BJ (cell line): ENCODE measurements at regions of chr1 and their contacts with region 1.

Region 1: DNA sequence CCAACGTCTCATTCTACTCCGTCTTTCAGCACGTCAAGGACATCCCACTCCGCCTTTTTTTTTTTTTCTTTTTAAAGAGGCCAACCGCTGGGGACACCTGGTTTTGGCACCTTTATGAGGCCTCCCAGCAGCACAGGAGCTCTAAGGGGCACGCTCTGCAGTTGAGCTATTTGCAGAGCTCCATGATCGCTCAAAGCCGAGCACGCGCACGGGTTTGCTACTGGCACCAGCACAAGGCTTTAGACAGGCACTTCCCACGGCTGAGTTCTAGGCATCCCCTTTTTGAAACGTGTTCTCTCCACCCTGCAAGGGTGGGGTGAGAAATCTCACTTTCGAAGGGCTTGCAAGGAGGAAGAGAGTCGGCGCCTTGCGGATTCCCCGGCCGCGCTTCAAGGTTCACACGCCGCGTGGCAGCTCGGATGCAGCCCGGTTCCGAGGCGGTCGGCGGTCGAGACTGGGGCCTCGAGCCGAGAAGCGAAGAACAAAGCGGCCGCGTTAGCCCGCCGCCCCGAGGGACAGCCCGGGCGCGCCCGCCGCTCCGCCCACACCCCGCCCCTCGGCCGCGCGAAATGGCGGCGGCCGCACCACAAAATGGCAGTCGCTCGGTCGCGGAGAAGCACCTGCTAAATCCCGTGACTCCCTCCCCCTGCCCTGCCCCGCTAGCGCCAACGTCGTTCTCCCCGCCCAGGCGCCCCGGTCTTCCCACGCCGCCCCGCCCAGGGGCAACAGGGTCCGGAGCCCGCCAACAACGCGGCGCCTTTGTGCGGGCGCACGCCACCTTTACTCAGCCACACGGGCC is 12.9 kb upstream of the SPEN start:
- DNase-seq: no peak
- H3K4me3 ChIP-seq: peak overlapping the region; percentile 88
- H3K27me3 ChIP-seq: no peaks in the 10 kb centered on the region
- CTCF ChIP-seq: no peak

Region 2: GRCh38 chr1:15796086-15796462 is 38.5 kb before region 1 on chr1:
- CTCF ChIA-PET with region 1: interaction called, 3 read pairs
- POLR2A ChIA-PET with region 1: interaction called, 25 read pairs
- DNase-seq: no peak
- H3K4me3 ChIP-seq: no peak overlapping the region
- H3K27me3 ChIP-seq: no peaks in the 10 kb centered on the region
- CTCF ChIP-seq: no peak

Region 3: DNA sequence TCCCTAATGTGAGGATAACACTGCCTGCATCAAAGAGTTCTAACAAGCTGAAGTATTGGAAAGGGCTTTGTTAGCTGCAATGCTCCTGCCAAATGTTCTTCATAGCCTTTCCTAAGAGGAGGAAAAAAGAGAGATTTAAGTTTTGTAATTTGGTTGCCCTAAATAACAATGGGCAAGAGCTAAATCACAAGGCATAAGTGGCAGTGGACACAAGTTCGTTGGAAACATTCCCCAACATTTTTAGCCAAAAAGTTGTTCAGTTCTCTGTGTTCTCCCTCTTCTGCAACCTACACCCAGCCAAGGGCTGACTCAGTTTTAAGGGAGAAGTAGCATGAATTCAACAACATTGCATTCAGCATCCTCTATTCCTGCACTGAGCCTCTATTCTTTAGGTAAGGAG is 24.5 kb before region 1 on chr1:
- CTCF ChIA-PET with region 1: interaction called, 7 read pairs
- POLR2A ChIA-PET with region 1: interaction called, 15 read pairs
- DNase-seq: no peak
- H3K4me3 ChIP-seq: no peak overlapping the region
- H3K27me3 ChIP-seq: no peaks in the 10 kb centered on the region
- CTCF ChIP-seq: no peak

Region 4: DNA sequence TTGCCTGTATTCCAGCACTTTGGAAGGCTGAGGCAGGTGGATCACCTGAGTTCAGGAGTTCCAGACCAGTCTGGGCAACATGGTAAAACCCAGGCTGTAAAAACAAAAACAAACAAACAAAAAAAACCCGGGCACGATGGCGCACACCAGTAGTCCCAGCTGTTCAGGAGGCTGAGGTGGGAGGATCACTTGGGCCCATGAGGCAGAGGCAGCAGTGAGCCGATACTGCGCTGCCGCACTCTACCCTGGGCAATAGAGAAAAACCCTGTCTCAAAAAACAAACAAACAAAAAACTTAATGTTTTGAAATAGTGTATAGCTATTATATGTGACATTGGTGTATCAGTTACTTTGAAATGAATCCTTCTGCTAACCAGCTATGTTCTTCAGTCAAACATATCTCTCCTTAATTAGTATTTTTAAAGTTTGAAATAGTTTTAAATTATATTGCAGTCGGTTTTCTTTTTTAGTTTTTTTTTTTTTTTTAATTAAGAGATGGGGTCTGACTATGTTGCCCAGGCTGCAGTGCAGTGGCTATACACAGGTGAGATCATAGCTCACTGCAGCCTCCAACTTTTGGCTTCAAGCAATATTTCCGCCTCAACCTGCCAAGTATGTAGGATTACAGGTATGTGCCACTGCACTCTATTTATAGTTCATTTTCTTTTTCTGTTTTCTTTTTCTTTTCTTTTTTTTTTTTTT is 24.2 kb after region 1 on chr1:
- CTCF ChIA-PET with region 1: no interaction called
- POLR2A ChIA-PET with region 1: no interaction called
- DNase-seq: no peak
- H3K4me3 ChIP-seq: no peak overlapping the region
- H3K27me3 ChIP-seq: no peaks in the 10 kb centered on the region
- CTCF ChIP-seq: no peak